PC-3 (cell line): ENCODE measurements at regions of chr2 and their contacts with region 1.

Region 1: GRCh38 chr2:11688222-11689069 is 18.5 kb upstream of the NTSR2 start:
- DNase-seq: peak; percentile 79
- ATAC-seq: peak; percentile 87
- H3K4me3 ChIP-seq: peak overlapping the region; percentile 47
- H3K27ac ChIP-seq: peak overlapping the region; percentile 21
- H3K4me1 ChIP-seq: peaks cover 30% of the 10 kb centered on the region
- H3K27me3 ChIP-seq: no peaks in the 10 kb centered on the region
- CTCF ChIP-seq: peak; percentile 95

Region 2: GRCh38 chr2:11738589-11739436 is 50.4 kb after region 1 on chr2:
- CTCF ChIA-PET with region 1: interaction called, 9 read pairs
- POLR2A ChIA-PET with region 1: interaction called, 12 read pairs
- intact Hi-C with region 1: no loop called
- DNase-seq: peak; percentile 71
- ATAC-seq: peak; percentile 92
- H3K4me3 ChIP-seq: no peak overlapping the region
- H3K27ac ChIP-seq: peak overlapping the region; percentile 44
- H3K4me1 ChIP-seq: peaks cover 28% of the 10 kb centered on the region
- H3K27me3 ChIP-seq: no peaks in the 10 kb centered on the region
- CTCF ChIP-seq: peak; percentile 66

Region 3: GRCh38 chr2:11746376-11746806 is 57.9 kb after region 1 on chr2 and contains the start of gene LPIN1:
- CTCF ChIA-PET with region 1: interaction called, 10 read pairs
- POLR2A ChIA-PET with region 1: no interaction called
- intact Hi-C with region 1: loop called (anchors 1 kb)
- DNase-seq: peak; percentile 81
- ATAC-seq: peak; percentile 65
- H3K4me3 ChIP-seq: peak within 1 kb of the TSS; percentile 92
- H3K27ac ChIP-seq: peak within 1 kb of the TSS; percentile 26; the same call in 1 of the 2 replicates
- H3K4me1 ChIP-seq: peaks cover 54% of the 10 kb centered on the region
- H3K27me3 ChIP-seq: no peaks in the 10 kb centered on the region
- CTCF ChIP-seq: no peak
- total RNA-seq, gene LPIN1: 40.9 and 46.9 TPM in 2 replicates

Region 4: GRCh38 chr2:11778923-11779757 is 90.7 kb after region 1 on chr2:
- CTCF ChIA-PET with region 1: interaction called, 4 read pairs
- POLR2A ChIA-PET with region 1: no interaction called
- intact Hi-C with region 1: loop called (anchors 1 kb)
- DNase-seq: peak; percentile 86
- ATAC-seq: peak; percentile 98
- H3K4me3 ChIP-seq: no peak overlapping the region
- H3K27ac ChIP-seq: no peak overlapping the region
- H3K4me1 ChIP-seq: peaks cover 8% of the 10 kb centered on the region; the same call in 1 of the 2 replicates
- H3K27me3 ChIP-seq: no peaks in the 10 kb centered on the region
- CTCF ChIP-seq: peak; percentile 97

Region 5: DNA sequence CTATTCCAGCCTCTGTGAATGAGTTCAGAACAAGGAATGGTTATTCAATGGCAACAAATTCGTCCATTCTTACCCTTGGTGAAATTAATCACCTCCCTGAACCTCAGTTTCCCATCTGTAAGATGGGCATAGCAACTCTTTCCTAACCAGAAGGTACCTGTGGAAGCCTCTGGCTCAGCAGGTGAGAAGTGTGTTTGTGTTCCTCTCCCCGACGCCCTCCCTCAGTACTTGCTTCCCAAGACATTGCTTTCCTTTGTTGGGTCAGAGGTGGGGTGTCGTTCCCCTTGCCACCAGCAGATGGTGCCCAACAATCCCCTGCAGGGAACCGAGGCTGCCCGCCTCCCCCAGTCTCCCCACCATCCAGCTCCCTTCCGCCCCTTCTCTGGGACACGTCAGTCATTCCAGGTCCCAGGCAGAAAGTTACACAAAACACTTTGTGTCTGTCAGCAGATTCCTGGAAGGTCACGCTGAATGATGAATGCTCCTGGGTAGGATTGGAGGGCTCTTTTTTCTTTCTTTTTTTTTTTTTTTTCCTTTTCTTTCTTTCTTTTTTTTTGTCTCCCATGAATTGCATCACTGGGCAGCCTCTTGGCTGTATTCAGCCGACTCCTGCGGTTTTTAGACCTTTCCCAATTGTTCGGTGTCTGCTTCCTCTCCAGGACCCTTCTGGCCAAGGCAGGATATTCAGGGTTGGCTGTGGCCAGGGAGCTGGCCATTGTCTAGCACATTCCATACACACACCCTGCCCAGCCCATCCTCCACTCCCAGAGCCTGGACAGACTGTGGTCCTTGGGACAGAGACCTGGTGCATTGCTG is 175.3 kb after region 1 on chr2:
- CTCF ChIA-PET with region 1: no interaction called
- POLR2A ChIA-PET with region 1: no interaction called
- intact Hi-C with region 1: no loop called
- DNase-seq: peak; percentile 93
- ATAC-seq: peak; percentile 96
- H3K4me3 ChIP-seq: no peak overlapping the region
- H3K27ac ChIP-seq: peak overlapping the region; percentile 44
- H3K4me1 ChIP-seq: peaks cover 10% of the 10 kb centered on the region
- H3K27me3 ChIP-seq: no peaks in the 10 kb centered on the region
- CTCF ChIP-seq: peak; percentile 94